ENCODE measurements at regions of chr1 and their contacts with region 1.

Region 1: GRCh38 chr1:93846211-93846991 is 32.6 kb downstream of the DNTTIP2 start:
- DNase-seq: peak; percentile 80 to 90 (median 82)
- ATAC-seq: peak; percentile 84
- H3K4me3 ChIP-seq: peak overlapping the region; percentile 87
- H3K27ac ChIP-seq: peak overlapping the region; percentile 87
- H3K4me1 ChIP-seq: peaks cover 17 to 21% of the 10 kb centered on the region in 2 experiments; a peak in 4 of 5 replicates
- H3K27me3 ChIP-seq: no peaks in the 10 kb centered on the region
- CTCF ChIP-seq: peak; percentile 31 to 51 (median 40); a peak in 5 of 6 replicates
- EP300 ChIP-seq: no peak
- POLR2A ChIP-seq: peak; percentile 82
- RAD21 ChIP-seq: no peak

Region 2: DNA sequence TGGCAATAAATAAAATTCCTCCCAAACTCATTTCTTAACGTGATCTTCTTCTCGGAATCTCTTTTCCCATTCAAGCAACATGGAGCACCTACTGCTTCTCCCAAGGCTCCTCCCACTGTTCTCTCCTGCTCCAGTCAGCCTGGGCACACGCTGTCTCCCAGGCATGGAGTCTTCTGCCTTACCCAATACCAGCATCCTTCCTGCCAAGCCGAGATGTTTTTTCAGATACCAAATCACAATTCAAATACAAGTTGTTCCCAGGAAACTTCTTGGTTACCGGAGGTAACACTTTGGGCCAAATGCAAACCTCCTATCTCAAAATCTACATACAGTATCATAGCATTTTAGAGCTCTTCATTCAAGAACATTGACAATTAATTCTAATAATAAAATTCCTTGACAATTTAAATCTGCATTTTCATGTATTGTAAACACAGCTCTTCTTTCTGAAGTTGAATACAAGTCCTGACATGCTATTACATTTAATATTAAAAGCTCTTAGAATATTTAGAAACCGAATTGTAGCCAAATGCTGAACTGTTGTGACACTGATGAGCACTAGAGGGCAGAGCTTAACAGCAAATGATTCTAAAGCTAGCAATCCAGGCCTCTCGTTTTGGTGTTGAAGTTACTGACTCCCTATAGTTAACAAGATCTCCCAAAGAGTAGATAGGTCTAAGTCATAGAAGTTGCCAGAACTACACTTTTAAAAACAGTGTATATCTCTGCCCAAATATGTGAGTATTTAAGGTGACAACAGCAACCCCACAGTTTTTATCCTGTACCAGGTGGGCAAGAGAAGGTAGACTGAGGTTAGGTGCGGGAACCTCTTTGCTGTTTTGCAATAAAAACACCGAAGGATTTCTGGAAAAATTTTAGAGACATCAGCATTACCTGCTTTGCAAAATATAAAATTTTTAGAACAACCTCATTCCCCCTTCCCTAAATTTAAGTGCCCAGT is 217.0 kb before region 1 on chr1:
- CTCF ChIA-PET with region 1: interaction called, 31 read pairs
- POLR2A ChIA-PET with region 1: interaction called, 11 read pairs
- in situ Hi-C with region 1: no loop called
- intact Hi-C with region 1: loop called (anchors 1 kb)
- DNase-seq: peak; percentile 48 to 71 (median 52)
- ATAC-seq: peak; percentile 83
- H3K4me3 ChIP-seq: no peak overlapping the region
- H3K27ac ChIP-seq: no peak overlapping the region
- H3K4me1 ChIP-seq: no peaks in the 10 kb centered on the region
- H3K27me3 ChIP-seq: no peaks in the 10 kb centered on the region
- CTCF ChIP-seq: peak; percentile 70 to 95 (median 74)
- EP300 ChIP-seq: no peak
- POLR2A ChIP-seq: no peak
- RAD21 ChIP-seq: peak; percentile 99

Region 3: GRCh38 chr1:93734999-93735398 is 111.4 kb before region 1 on chr1:
- CTCF ChIA-PET with region 1: no interaction called
- POLR2A ChIA-PET with region 1: no interaction called
- in situ Hi-C with region 1: no loop called
- intact Hi-C with region 1: loop called (anchors 5 kb)
- DNase-seq: peak; percentile 14 to 25 (median 17)
- ATAC-seq: peak; percentile 59
- H3K4me3 ChIP-seq: no peak overlapping the region
- H3K27ac ChIP-seq: no peak overlapping the region
- H3K4me1 ChIP-seq: no peaks in the 10 kb centered on the region
- H3K27me3 ChIP-seq: peaks cover 28 to 60% of the 10 kb centered on the region in 2 experiments; a peak in 4 of 5 replicates
- CTCF ChIP-seq: peak; percentile 49 to 53 (median 51)
- EP300 ChIP-seq: no peak
- POLR2A ChIP-seq: no peak
- RAD21 ChIP-seq: peak in 1 of 2 experiments; percentile 43; a peak in 2 of 4 replicates

Region 4: GRCh38 chr1:93909146-93910050 is 63.0 kb after region 1 on chr1 and contains the start of gene GCLM:
- CTCF ChIA-PET with region 1: no interaction called
- POLR2A ChIA-PET with region 1: no interaction called
- in situ Hi-C with region 1: no loop called
- intact Hi-C with region 1: loop called (anchors 1 kb)
- DNase-seq: peak; percentile 92 to 97 (median 94)
- ATAC-seq: peak; percentile 94
- H3K4me3 ChIP-seq: peak within 1 kb of the TSS; percentile 98
- H3K27ac ChIP-seq: peak within 1 kb of the TSS; percentile 95
- H3K4me1 ChIP-seq: peaks cover 9 to 19% of the 10 kb centered on the region in 2 experiments; a peak in 4 of 5 replicates
- H3K27me3 ChIP-seq: no peaks in the 10 kb centered on the region
- CTCF ChIP-seq: peak; percentile 77 to 99 (median 97)
- EP300 ChIP-seq: peak; percentile 85
- POLR2A ChIP-seq: peak; percentile 77
- RAD21 ChIP-seq: peak; percentile 50 to 60
- polyA plus RNA-seq, gene GCLM: 9.3 to 9.6 TPM